GM12878 (cell line): ENCODE measurements at regions of chr4 and their contacts with region 1.

Region 1: DNA sequence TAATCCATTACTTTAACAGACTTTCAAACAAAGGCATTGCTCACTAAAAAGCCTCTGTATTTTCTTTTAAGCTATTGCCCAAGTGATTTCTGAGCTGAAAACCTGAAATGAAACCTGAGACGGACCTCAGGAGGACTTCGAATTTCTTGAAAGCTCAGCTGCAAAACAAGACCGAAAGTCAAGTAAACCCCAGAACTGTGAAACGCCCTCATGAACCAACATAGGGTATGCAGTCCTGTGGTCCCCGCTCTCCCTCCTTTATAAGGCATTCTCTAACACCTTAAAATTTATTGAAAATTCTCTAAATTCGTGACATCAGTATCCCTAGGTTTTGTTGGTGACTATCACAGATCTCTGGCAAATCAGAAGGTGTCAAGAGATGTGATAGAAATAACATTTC is 91.8 kb downstream of the SHISA3 start:
- DNase-seq: peak; percentile 62
- ATAC-seq: peak; percentile 90
- H3K4me3 ChIP-seq: peak overlapping the region; percentile 62
- H3K27ac ChIP-seq: peak overlapping the region; percentile 92
- H3K4me1 ChIP-seq: peaks cover 32% of the 10 kb centered on the region
- H3K27me3 ChIP-seq: no peaks in the 10 kb centered on the region
- CTCF ChIP-seq: no peak
- EP300 ChIP-seq: peak in 1 of 2 experiments; percentile 57; a peak in 2 of 4 replicates
- POLR2A ChIP-seq: no peak
- RAD21 ChIP-seq: no peak

Region 2: DNA sequence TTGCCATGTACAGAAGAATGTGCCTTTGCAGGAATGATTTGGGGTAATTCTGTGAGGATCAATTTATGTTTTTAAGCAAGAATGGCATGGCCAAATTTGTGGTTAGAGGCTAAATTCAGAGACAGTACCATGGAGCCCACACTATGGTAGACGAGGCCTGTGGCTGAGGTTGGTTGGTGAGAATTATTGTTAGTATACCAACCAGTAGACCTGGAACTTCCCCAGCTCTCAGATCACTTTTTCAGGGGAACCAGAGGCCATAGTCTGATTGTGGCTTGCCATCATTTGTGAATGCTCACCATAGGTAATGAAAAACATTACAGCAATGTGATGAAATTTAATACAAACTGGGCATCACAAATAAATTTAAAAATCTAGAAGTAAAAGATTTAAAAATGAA is 35.5 kb before region 1 on chr4:
- CTCF ChIA-PET with region 1: interaction called, 4 read pairs
- POLR2A ChIA-PET with region 1: interaction called, 3 read pairs
- RAD21 ChIA-PET with region 1: interaction called, 6 read pairs
- SMC1A ChIA-PET with region 1: interaction called, 15 read pairs
- in situ Hi-C with region 1: no loop called
- intact Hi-C with region 1: loop called (anchors 5 kb)
- DNase-seq: peak; percentile 19
- ATAC-seq: peak; percentile 97
- H3K4me3 ChIP-seq: no peak overlapping the region
- H3K27ac ChIP-seq: no peak overlapping the region
- H3K4me1 ChIP-seq: no peaks in the 10 kb centered on the region
- H3K27me3 ChIP-seq: no peaks in the 10 kb centered on the region
- CTCF ChIP-seq: no peak
- EP300 ChIP-seq: no peak
- POLR2A ChIP-seq: no peak
- RAD21 ChIP-seq: no peak

Region 3: DNA sequence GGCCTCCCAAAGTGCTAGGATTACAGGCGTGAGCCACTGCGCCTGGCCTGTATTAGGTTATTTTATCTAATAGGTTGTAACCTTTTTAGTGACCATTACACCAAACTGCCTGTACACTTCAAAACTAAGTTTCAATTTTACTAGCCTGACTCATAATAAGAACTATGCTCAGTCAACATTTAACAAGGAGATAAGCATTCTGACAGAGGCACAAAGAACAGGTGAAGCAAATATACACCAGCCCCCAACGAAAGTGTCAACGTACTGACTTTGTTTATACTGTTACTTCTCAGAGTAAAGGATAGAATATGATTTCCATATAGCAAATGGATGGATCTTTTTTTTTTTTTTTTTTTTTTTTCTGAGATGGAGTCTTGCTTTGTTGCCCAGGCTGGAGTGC is 29.1 kb before region 1 on chr4:
- CTCF ChIA-PET with region 1: interaction called, 3 read pairs
- POLR2A ChIA-PET with region 1: no interaction called
- RAD21 ChIA-PET with region 1: no interaction called
- SMC1A ChIA-PET with region 1: interaction called, 15 read pairs
- in situ Hi-C with region 1: no loop called
- intact Hi-C with region 1: loop called (anchors 2 kb)
- DNase-seq: peak; percentile 39
- ATAC-seq: peak; percentile 97
- H3K4me3 ChIP-seq: no peak overlapping the region
- H3K27ac ChIP-seq: no peak overlapping the region
- H3K4me1 ChIP-seq: peaks cover 5% of the 10 kb centered on the region; the same call in 1 of the 2 replicates
- H3K27me3 ChIP-seq: no peaks in the 10 kb centered on the region
- CTCF ChIP-seq: no peak
- EP300 ChIP-seq: no peak
- POLR2A ChIP-seq: no peak
- RAD21 ChIP-seq: no peak

Region 4: DNA sequence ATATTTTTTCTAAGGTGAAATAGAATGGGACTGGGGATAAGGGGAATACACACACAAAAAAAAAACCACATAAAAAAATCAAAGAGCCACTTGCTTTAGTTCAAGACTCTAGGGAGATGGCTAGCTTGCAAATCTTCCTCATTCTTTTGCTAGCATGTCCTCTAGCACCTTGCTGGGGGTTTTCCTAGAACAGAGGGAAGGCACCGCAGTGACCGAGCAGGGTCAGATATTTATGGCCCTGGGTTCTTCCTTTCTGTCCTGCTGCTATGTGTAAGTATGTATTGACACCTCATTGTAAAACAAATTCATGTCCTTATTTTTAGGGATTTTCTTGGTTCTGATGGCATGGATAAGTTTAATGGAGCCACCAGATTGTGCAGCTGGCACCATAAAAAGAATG is 10.6 kb before region 1 on chr4:
- CTCF ChIA-PET with region 1: interaction called, 6 read pairs
- POLR2A ChIA-PET with region 1: interaction called, 9 read pairs
- RAD21 ChIA-PET with region 1: interaction called, 25 read pairs
- SMC1A ChIA-PET with region 1: interaction called, 42 read pairs
- in situ Hi-C with region 1: no loop called
- intact Hi-C with region 1: no loop called
- DNase-seq: no peak
- ATAC-seq: peak; percentile 68
- H3K4me3 ChIP-seq: no peak overlapping the region
- H3K27ac ChIP-seq: no peak overlapping the region
- H3K4me1 ChIP-seq: no peaks in the 10 kb centered on the region
- H3K27me3 ChIP-seq: no peaks in the 10 kb centered on the region
- CTCF ChIP-seq: no peak
- EP300 ChIP-seq: no peak
- POLR2A ChIP-seq: no peak
- RAD21 ChIP-seq: no peak

Region 5: GRCh38 chr4:42501624-42502401 is 12.7 kb after region 1 on chr4:
- CTCF ChIA-PET with region 1: interaction called, 5 read pairs
- POLR2A ChIA-PET with region 1: interaction called, 5 read pairs
- RAD21 ChIA-PET with region 1: no interaction called
- SMC1A ChIA-PET with region 1: interaction called, 13 read pairs
- in situ Hi-C with region 1: no loop called
- intact Hi-C with region 1: no loop called
- DNase-seq: no peak
- ATAC-seq: no peak
- H3K4me3 ChIP-seq: no peak overlapping the region
- H3K27ac ChIP-seq: no peak overlapping the region
- H3K4me1 ChIP-seq: no peaks in the 10 kb centered on the region
- H3K27me3 ChIP-seq: no peaks in the 10 kb centered on the region
- CTCF ChIP-seq: no peak
- EP300 ChIP-seq: no peak
- POLR2A ChIP-seq: no peak
- RAD21 ChIP-seq: no peak

Region 6: DNA sequence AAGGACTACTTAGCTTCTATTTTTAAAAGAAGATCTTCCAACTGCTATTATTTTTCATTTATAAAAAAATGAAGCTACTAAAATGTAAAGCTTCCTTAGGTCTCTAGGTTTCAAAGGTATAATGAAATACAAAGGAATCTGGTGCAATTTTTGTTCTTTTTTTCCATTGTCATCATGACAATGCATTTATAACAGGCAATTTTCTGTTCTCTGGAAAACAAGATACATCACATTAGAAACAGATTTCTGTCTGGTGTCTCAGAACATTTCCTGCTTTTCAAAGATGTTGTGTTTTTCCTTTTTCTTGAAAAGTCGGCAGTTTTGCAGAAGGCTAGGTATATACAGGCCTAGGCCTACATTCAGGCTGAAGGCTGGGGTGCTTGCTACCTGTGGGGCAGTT is 231.4 kb after region 1 on chr4:
- CTCF ChIA-PET with region 1: no interaction called
- POLR2A ChIA-PET with region 1: no interaction called
- RAD21 ChIA-PET with region 1: no interaction called
- SMC1A ChIA-PET with region 1: no interaction called
- in situ Hi-C with region 1: no loop called
- intact Hi-C with region 1: no loop called
- DNase-seq: no peak
- ATAC-seq: no peak
- H3K4me3 ChIP-seq: no peak overlapping the region
- H3K27ac ChIP-seq: no peak overlapping the region
- H3K4me1 ChIP-seq: no peaks in the 10 kb centered on the region
- H3K27me3 ChIP-seq: no peaks in the 10 kb centered on the region
- CTCF ChIP-seq: no peak
- EP300 ChIP-seq: no peak
- POLR2A ChIP-seq: no peak
- RAD21 ChIP-seq: no peak

Region 7: DNA sequence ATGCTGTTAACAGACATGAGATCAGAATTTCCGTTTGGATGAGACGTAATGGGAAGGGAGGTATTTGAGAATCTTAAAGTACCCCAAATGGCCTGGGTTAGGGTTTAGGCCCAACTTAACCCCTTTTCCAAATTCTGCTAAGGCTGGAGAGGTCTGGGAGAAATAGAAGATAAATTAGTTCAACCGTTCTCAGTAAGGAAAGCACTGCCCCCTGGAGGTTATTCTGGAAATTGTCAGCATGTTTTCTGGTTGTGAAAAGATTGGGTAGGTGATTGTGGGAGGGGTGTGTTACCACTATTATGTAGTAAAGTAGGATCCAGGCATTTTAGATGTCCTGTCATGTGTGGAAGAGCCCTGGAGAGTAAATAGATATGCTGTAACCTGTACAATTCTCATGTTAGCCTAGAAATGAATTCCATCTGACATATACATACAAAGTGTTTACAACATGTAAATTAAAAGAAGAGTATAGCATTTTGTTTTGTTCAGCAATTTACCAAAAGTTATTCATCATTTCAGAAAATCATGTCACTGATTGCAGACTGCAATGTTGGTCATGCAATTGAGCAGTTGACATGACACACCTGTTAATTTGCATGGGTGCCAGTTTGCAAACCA is 376.6 kb after region 1 on chr4:
- CTCF ChIA-PET with region 1: no interaction called
- POLR2A ChIA-PET with region 1: no interaction called
- RAD21 ChIA-PET with region 1: no interaction called
- SMC1A ChIA-PET with region 1: no interaction called
- in situ Hi-C with region 1: no loop called
- intact Hi-C with region 1: no loop called
- DNase-seq: no peak
- ATAC-seq: peak; percentile 85
- H3K4me3 ChIP-seq: no peak overlapping the region
- H3K27ac ChIP-seq: no peak overlapping the region
- H3K4me1 ChIP-seq: no peaks in the 10 kb centered on the region
- H3K27me3 ChIP-seq: no peaks in the 10 kb centered on the region
- CTCF ChIP-seq: peak; percentile 65 to 72 (median 68)
- EP300 ChIP-seq: no peak
- POLR2A ChIP-seq: no peak
- RAD21 ChIP-seq: peak; percentile 89